Esophagus squamous epithelium (tissue), 5 donors: ENCODE measurements at regions of chr4 and their contacts with region 1.

Region 1: GRCh38 chr4:164748375-164748774 is 5.6 kb upstream of the SMIM31 start:
- DNase-seq: no peak
- H3K4me3 ChIP-seq: no peak overlapping the region
- H3K27ac ChIP-seq: no peak overlapping the region
- H3K4me1 ChIP-seq: no peaks in the 10 kb centered on the region
- H3K27me3 ChIP-seq: no peaks in the 10 kb centered on the region
- CTCF ChIP-seq: peak in 3 of 6 experiments; percentile 21 to 48 (median 35)
- POLR2A ChIP-seq: no peak

Region 2: GRCh38 chr4:163554870-163555465 is 1193.4 kb before region 1 on chr4:
- intact Hi-C with region 1: loop called (anchors 10 kb)
- DNase-seq: no peak
- H3K4me3 ChIP-seq: no peak overlapping the region
- H3K27ac ChIP-seq: no peak overlapping the region
- H3K4me1 ChIP-seq: peaks cover 5 to 13% (median 6%) of the 10 kb centered on the region in 3 donors
- H3K27me3 ChIP-seq: no peaks in the 10 kb centered on the region
- CTCF ChIP-seq: peak; percentile 29 to 77 (median 67)
- POLR2A ChIP-seq: no peak